GM23248 (cell line): ENCODE measurements at regions of chr12 and their contacts with region 1.

Region 1: DNA sequence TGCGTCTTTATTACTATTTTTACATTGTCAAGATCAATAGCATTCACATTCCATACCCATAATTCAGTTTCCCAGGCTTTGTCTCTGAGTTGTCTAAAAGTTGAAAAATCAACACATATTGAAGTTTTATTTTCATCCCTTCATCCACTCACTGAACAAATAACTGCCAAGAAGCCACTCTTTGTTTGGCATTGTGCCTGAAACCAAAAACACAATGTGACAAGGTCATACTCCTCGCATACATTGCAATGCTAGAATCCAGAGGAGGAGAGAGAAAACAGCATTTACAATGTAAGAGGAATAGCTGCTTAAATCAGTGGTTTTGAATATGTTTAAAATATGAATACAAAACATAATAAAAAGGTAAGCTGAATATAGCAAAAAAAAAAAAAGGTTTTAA is 71.8 kb downstream of the CCDC60 start:
- DNase-seq: no peak
- H3K4me3 ChIP-seq: no peak overlapping the region
- H3K27ac ChIP-seq: no peak overlapping the region
- H3K4me1 ChIP-seq: no peaks in the 10 kb centered on the region
- H3K27me3 ChIP-seq: no peaks in the 10 kb centered on the region

Region 2: GRCh38 chr12:118404876-118405521 is 1001.3 kb before region 1 on chr12:
- in situ Hi-C with region 1: loop called (anchors 10 kb)
- DNase-seq: peak; percentile 79
- H3K4me3 ChIP-seq: no peak overlapping the region
- H3K27ac ChIP-seq: no peak overlapping the region
- H3K4me1 ChIP-seq: peaks cover 10% of the 10 kb centered on the region
- H3K27me3 ChIP-seq: no peaks in the 10 kb centered on the region

Region 3: DNA sequence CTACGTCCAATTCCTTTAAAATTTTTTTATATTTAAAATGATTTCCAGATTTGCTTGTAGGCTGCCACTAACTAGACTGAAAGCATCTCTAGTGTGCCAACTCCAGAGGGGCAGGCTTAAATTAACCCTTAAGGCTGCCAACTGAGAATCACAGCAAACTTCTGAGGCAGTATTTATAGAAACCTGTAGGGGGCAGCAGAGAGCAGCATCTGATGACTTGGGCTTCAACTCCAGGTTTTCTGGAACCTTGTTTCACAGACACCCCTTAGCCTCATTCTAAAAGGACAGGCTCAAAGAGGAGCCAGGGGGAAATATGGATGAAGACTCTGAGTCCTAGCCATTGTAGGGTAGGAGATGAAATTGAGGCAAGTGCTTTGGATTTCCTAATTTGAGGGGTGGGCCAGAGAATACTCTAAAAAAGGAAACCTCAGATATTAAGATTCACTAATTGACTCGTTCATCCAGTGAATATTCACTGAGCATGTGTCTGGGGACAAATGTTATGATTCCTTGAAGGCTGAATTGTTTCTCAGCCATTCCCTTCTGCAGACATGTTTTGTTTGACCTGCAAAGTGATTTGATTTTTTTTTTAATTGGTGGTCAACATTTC is 290.9 kb before region 1 on chr12:
- in situ Hi-C with region 1: loop called (anchors 10 kb)
- DNase-seq: peak; percentile 58
- H3K4me3 ChIP-seq: no peak overlapping the region
- H3K27ac ChIP-seq: no peak overlapping the region
- H3K4me1 ChIP-seq: no peaks in the 10 kb centered on the region
- H3K27me3 ChIP-seq: no peaks in the 10 kb centered on the region

Region 4: GRCh38 chr12:119727600-119728443 is 321.5 kb after region 1 on chr12:
- in situ Hi-C with region 1: no loop called
- DNase-seq: no peak
- H3K4me3 ChIP-seq: no peak overlapping the region
- H3K27ac ChIP-seq: no peak overlapping the region
- H3K4me1 ChIP-seq: no peaks in the 10 kb centered on the region
- H3K27me3 ChIP-seq: no peaks in the 10 kb centered on the region